Mammary epithelial cell (primary cell): ENCODE measurements at regions of chr19 and their contacts with region 1.

Region 1: DNA sequence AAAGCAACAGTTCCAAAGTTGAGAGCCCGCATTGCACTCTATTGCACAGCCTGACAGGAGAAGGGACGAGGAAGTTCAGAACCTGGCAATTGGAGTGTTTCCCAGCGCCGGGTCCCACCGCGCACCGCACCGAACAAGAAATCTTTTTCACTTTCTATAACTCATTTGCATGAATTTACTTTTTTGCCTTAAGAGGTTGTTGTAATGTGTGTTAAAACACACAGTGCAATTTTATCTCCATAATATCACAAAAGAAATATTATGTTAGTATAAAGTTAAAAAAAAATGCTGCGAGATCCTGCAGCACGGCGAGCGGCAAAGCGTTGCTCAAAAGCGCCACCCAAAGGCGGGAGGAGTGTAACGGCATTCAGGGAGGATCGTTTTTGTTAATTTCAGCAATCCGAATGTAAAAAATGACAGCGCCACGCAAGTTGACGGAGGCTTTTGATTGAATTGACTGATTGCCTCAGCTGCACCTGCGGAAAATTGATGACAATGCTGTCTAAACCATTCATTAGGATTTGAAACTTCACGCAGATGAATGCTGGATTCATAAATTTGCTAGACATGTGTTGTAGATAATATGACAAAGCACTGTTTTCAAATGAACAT is 303.6 kb upstream of the ZNF507 start:
- DNase-seq: peak; percentile 29
- H3K4me3 ChIP-seq: no peak overlapping the region
- H3K27ac ChIP-seq: no peak overlapping the region
- H3K4me1 ChIP-seq: no peaks in the 10 kb centered on the region
- H3K27me3 ChIP-seq: no peaks in the 10 kb centered on the region
- CTCF ChIP-seq: peak; percentile 26 to 49

Region 2: DNA sequence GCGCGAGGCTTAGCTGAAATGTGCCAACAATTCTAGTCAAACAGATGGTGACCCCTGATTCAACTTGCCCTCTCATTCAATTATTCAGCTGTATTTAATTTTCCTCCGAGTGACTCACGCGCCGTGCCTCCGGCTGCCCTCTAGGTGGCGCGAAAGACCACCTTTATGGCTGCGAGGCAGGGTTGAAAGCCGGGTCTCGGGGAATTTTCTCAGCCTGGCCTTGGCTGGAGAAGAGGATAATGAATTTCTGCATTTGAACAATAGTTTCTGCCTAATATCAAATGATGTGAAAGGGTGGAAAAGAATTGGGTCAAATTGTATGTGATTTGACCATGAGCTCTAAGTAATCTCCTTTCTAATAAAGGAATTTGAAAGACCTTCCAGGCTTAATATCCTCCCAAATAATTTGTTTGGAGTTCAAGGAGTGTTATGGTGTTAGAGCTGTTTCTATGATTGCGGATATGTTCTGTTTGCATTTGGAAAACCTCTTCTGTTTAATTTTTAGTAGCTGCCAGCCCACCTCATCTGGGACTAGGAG is 1358.7 kb before region 1 on chr19:
- CTCF ChIA-PET with region 1: no interaction called
- dilution Hi-C with region 1: no loop called
- in situ Hi-C with region 1: no loop called
- intact Hi-C with region 1: loop called (anchors 5 kb)
- DNase-seq: peak; percentile 68
- H3K4me3 ChIP-seq: no peak overlapping the region
- H3K27ac ChIP-seq: no peak overlapping the region
- H3K4me1 ChIP-seq: no peaks in the 10 kb centered on the region
- H3K27me3 ChIP-seq: no peaks in the 10 kb centered on the region
- CTCF ChIP-seq: peak; percentile 79 to 87

Region 3: GRCh38 chr19:31583148-31583547 is 458.6 kb before region 1 on chr19:
- CTCF ChIA-PET with region 1: no interaction called
- dilution Hi-C with region 1: no loop called
- in situ Hi-C with region 1: loop called in 1 of 2 experiments (anchors 25 kb)
- intact Hi-C with region 1: no loop called
- DNase-seq: no peak
- H3K4me3 ChIP-seq: no peak overlapping the region
- H3K27ac ChIP-seq: no peak overlapping the region
- H3K4me1 ChIP-seq: no peaks in the 10 kb centered on the region
- H3K27me3 ChIP-seq: no peaks in the 10 kb centered on the region
- CTCF ChIP-seq: no peak

Region 4: GRCh38 chr19:31591261-31591660 is 450.5 kb before region 1 on chr19:
- CTCF ChIA-PET with region 1: no interaction called
- dilution Hi-C with region 1: no loop called
- in situ Hi-C with region 1: loop called in 1 of 2 experiments (anchors 25 kb)
- intact Hi-C with region 1: loop called (anchors 1 kb)
- DNase-seq: peak; percentile 34
- H3K4me3 ChIP-seq: no peak overlapping the region
- H3K27ac ChIP-seq: no peak overlapping the region
- H3K4me1 ChIP-seq: no peaks in the 10 kb centered on the region
- H3K27me3 ChIP-seq: no peaks in the 10 kb centered on the region
- CTCF ChIP-seq: peak in 1 of 2 donors; percentile 29

Region 5: DNA sequence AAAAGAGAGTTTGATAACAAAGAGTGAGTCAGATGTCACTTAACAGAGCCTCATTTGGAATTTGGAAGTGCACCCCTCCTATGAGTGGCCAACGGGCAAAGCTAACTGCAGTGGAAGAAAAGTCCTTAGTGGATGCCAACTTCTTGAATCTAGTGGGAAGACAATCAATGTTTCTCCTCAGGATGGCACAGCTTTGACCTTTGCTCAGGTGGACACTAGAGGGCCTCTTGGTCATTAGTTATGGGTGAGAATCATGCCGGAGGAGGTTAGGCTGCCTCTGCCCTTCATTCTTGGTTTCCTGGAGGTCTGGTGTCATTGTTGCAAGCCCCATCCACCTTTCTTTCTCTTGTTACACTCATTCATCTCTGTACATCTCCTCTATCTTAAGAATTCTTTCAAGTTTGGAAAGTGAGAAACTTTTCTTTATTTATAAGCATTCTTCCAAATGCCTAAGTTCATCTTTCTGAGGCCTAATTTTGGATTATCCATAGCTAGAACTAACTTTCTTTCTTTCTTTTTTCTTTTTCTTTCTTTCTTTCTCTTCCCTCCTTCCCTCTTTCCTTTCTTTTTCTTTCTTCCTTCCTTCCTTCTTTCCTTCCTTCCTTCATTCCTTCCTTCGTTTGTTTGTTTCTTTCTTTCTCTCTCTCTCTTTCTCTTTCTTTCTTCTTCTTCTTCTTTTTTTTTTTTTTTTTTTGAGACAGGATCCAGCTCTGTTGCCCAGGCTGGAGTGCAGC is 365.3 kb before region 1 on chr19:
- CTCF ChIA-PET with region 1: no interaction called
- dilution Hi-C with region 1: no loop called
- in situ Hi-C with region 1: no loop called
- intact Hi-C with region 1: loop called (anchors 5 kb)
- DNase-seq: peak; percentile 14
- H3K4me3 ChIP-seq: no peak overlapping the region
- H3K27ac ChIP-seq: no peak overlapping the region
- H3K4me1 ChIP-seq: peaks cover 6% of the 10 kb centered on the region
- H3K27me3 ChIP-seq: no peaks in the 10 kb centered on the region
- CTCF ChIP-seq: peak; percentile 19 to 31

Region 6: DNA sequence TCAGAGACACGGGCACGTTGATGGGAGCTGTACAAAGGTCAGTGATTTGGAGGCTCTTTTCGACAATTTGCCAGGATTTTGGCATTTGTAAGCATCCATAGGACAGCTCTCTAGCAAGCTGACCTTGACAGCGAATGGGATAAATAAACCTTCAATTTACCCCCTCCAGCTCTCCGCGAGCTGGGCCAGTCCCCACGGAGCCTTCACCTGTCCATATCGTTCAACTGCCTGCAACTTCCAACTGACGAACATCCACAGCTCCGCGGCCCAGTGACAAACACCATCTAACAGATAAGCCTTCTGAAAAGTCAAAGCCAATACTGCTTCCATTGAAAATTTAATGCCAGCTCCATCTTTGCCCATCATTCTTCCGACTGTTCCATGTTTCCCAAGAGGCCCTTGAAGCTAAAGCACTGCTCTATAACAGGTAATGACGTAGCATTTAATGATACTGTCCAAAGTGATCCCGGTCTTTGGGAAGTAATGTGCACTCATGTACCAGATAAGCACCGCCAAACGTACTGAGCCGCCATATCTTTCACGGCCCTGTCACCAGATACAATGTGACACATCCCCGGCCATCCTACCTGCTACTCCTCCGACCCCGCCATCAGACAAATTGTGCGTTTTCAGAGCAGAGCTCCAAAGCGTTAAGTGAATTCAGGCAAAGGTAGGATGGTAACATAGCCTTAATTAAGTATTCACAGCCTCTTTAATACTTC is 61.7 kb before region 1 on chr19:
- CTCF ChIA-PET with region 1: no interaction called
- dilution Hi-C with region 1: loop called (anchors 5 kb)
- in situ Hi-C with region 1: no loop called
- intact Hi-C with region 1: no loop called
- DNase-seq: no peak
- H3K4me3 ChIP-seq: no peak overlapping the region
- H3K27ac ChIP-seq: no peak overlapping the region
- H3K4me1 ChIP-seq: no peaks in the 10 kb centered on the region
- H3K27me3 ChIP-seq: no peaks in the 10 kb centered on the region
- CTCF ChIP-seq: no peak

Region 7: GRCh38 chr19:32387701-32388392 is 346.1 kb after region 1 on chr19:
- CTCF ChIA-PET with region 1: no interaction called
- dilution Hi-C with region 1: no loop called
- in situ Hi-C with region 1: no loop called
- intact Hi-C with region 1: no loop called
- DNase-seq: no peak
- H3K4me3 ChIP-seq: no peak overlapping the region
- H3K27ac ChIP-seq: no peak overlapping the region
- H3K4me1 ChIP-seq: peaks cover 5% of the 10 kb centered on the region
- H3K27me3 ChIP-seq: no peaks in the 10 kb centered on the region
- CTCF ChIP-seq: no peak